Dorsolateral prefrontal cortex (tissue), 120 donors: ENCODE measurements at regions of chr3 and their contacts with region 1.

Region 1: GRCh38 chr3:197171481-197172067 is 126.8 kb downstream of the DLG1 start:
- DNase-seq: no peak
- H3K4me3 ChIP-seq: no peak overlapping the region
- H3K27ac ChIP-seq: peak overlapping the region in 29 of 59 donors; percentile 6 to 60 (median 19)
- H3K27me3 ChIP-seq: no peaks in the 10 kb centered on the region
- CTCF ChIP-seq: no peak

Region 2: DNA sequence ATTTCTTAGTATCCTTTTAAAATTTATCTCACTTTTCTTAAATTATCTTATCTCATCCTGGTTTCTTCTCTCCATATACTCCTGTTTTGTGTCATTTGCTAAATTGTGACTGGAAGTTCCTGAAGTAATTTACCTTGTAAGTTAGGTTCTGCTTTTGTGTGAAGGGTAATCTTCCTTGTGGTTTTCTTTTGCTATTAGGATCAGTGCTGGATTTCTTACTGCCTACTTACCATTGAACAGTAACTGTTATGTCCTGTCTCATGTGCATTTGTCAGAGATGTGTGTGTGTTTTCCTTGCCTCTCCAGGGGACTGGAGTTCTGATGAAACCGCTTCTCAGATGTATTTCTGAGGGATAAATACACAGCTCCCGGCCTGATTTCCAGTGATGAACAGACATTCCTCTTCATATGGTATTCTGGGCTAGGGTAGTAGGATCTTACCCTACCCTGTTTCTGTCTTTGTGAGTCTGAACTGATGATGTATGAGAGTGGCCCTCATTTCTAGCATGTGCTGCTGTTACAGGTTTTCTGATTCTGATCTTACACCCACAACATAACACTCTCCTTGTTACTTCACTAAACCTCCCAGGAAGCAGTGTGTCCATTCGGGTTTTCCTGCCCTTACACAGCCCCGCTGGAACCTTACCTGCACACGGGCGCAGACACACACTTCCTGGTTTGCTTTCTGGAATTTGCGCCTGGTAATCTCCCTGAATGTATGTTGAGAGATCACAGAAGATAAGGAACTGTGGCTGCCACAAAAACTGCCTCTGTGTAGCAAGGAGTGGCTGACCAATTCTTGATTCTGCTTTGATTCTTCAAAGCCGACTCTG is 417.3 kb before region 1 on chr3:
- intact Hi-C with region 1: no loop called
- DNase-seq: no peak
- H3K4me3 ChIP-seq: no peak overlapping the region
- H3K27ac ChIP-seq: peak overlapping the region in 2 of 59 donors; percentile 7 to 14
- H3K27me3 ChIP-seq: no peaks in the 10 kb centered on the region
- CTCF ChIP-seq: no peak

Region 3: GRCh38 chr3:197068077-197068476 is 103.5 kb before region 1 on chr3:
- intact Hi-C with region 1: no loop called
- DNase-seq: no peak
- H3K4me3 ChIP-seq: no peak overlapping the region
- H3K27ac ChIP-seq: no peak overlapping the region
- H3K27me3 ChIP-seq: no peaks in the 10 kb centered on the region
- CTCF ChIP-seq: no peak

Region 4: DNA sequence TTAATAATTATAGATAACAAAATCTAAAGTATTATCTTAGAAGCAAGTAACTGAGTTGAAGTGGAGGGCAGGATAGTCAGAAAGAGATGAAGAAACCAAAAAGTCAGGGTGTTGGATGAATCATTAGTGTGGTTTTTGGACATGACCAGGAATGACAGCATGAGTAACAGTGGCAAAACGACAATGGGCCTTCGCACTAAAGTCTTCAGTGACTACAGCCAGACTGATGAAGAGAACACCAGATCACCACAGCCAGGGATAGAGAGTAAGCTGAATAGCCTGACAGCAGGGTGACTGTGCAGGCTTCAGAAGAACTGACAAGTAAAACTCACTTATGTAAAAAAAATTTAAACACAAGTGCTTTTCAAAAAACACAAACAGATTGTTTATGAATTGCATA is 45.9 kb before region 1 on chr3:
- intact Hi-C with region 1: loop called in 1 of 2 experiments (anchors 10 kb)
- DNase-seq: no peak
- H3K4me3 ChIP-seq: peak overlapping the region in 1 of 59 donors; percentile 42
- H3K27ac ChIP-seq: peak overlapping the region in 45 of 59 donors; percentile 8 to 92 (median 83)
- H3K27me3 ChIP-seq: no peaks in the 10 kb centered on the region
- CTCF ChIP-seq: no peak

Region 5: DNA sequence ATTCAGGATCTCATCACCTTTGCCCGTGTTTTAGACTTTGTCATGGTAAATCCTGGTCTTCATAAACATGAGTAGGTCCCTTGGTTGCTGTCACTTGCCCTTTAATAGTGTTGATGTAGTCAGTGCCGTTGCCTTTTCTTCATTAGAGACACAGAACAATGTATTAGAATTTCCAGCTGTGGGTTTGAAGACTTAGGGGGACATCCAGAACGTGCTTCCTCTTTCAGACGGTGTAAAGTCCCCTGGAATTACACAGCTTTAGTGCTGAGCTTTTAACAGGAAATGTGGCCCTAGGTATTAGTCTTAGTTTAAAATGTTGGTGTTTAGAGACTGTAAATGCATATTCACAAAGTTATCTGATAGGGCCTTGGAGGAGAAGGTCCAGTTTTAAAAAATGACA is 610.7 kb after region 1 on chr3:
- intact Hi-C with region 1: no loop called
- DNase-seq: no peak
- H3K4me3 ChIP-seq: no peak overlapping the region
- H3K27ac ChIP-seq: peak overlapping the region in 10 of 59 donors; percentile 2 to 45 (median 34)
- H3K27me3 ChIP-seq: no peaks in the 10 kb centered on the region
- CTCF ChIP-seq: no peak